ENCODE measurements at regions of chr18 and their contacts with region 1.

Region 1: DNA sequence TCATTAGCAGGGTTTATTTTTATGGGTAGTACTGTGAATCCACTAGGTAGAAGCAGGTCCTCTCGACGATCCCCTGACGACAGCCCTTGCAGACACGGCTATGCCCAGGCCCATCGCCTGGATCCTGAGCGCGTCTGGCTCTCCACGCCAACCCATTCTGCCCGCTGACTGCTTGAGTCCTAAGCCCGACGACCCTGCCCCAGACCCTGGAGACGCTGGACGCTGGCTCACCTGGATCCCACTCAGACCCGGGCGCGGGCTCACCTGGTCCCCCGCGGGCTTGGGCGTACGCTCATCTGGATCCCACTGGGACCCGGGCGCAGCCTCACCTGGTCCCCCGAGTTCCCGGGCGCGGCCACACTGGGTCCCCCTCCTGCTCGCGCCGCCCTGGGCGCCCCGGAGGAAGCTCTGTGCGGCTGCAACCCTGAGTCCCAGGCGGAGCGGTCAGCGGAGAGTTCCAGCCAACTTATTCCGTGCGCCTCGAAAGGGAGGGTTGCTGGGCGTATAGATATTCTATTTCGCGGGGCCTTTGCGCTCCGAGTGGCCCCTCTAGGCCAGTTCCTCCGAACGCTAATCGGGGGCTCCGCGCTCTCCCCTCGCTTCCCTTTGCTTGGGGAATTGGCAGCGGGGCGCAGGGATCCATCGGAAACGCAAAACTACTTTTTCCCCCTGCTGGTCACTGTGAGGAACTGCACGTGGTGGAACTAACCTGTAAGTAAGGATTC is 22.4 kb upstream of the RMP24 start:
- DNase-seq: peak in 1 of 2 experiments; percentile 86
- H3K4me3 ChIP-seq: peak overlapping the region; percentile 75 to 87 (median 80)
- H3K27ac ChIP-seq: no peak overlapping the region
- H3K4me1 ChIP-seq: peaks cover 0 to 7% (median 2%) of the 10 kb centered on the region in 4 experiments; a peak in 4 of 7 replicates
- H3K27me3 ChIP-seq: no peaks in the 10 kb centered on the region
- CTCF ChIP-seq: peak; percentile 69 to 86 (median 75)
- EP300 ChIP-seq: peak in 1 of 2 experiments; percentile 11; a peak in 1 of 3 replicates
- POLR2A ChIP-seq: peak in 1 of 2 experiments; percentile 15; a peak in 1 of 3 replicates
- RAD21 ChIP-seq: peak; percentile 59 to 75

Region 2: DNA sequence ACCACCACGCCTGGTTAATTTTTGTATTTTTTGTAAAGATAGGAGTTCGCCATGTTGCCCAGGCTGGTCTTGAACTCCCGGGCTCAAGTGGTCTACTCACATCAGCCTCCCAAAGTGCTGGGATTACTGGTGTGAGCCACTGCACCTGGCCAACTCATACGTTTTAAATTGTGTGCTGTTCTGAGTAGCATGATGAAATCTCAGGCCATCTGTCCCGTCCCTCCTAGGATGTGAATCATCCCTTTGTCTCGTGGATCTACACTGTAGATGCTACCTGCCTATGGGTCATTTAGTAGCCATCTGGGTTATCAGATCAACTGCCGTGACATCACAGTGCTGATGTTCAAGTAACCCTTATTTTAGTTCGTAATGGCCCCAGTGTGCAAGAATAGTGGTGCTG is 16.1 kb before region 1 on chr18:
- CTCF ChIA-PET with region 1: interaction called, 78 read pairs
- POLR2A ChIA-PET with region 1: no interaction called
- DNase-seq: no peak
- H3K4me3 ChIP-seq: no peak overlapping the region
- H3K27ac ChIP-seq: no peak overlapping the region
- H3K4me1 ChIP-seq: peaks cover 0 to 4% (median 1%) of the 10 kb centered on the region in 4 experiments; a peak in 3 of 7 replicates
- H3K27me3 ChIP-seq: no peaks in the 10 kb centered on the region
- CTCF ChIP-seq: no peak
- EP300 ChIP-seq: no peak
- POLR2A ChIP-seq: no peak
- RAD21 ChIP-seq: no peak